Activated T-helper 1 cell treated with anti-CD3 and anti-CD28 coated beads, Interleukin-12 subunit alpha, Interleukin-12 subunit beta, Interleukin-2, Interleukin-4 antibody, amounts not matched to agents 30 ng/mL and 10 ng/mL and 1 ng/mL, durations not matched to agents 14 hours and 24 hours and 36 hours (primary cell): ENCODE measurements at regions of chr17 and their contacts with region 1.

Region 1: GRCh38 chr17:82037113-82037888 is at the start of gene DCXR:
- DNase-seq: peak; percentile 98
- H3K4me3 Mint-ChIP-seq: peak within 1 kb of the TSS; percentile 85
- H3K27ac Mint-ChIP-seq: peak within 1 kb of the TSS; percentile 93
- H3K4me1 Mint-ChIP-seq: peaks cover 24% of the 10 kb centered on the region
- H3K27me3 Mint-ChIP-seq: peaks cover 2% of the 10 kb centered on the region
- total RNA-seq, gene DCXR: 123 and 125 TPM in 2 replicates

Region 2: DNA sequence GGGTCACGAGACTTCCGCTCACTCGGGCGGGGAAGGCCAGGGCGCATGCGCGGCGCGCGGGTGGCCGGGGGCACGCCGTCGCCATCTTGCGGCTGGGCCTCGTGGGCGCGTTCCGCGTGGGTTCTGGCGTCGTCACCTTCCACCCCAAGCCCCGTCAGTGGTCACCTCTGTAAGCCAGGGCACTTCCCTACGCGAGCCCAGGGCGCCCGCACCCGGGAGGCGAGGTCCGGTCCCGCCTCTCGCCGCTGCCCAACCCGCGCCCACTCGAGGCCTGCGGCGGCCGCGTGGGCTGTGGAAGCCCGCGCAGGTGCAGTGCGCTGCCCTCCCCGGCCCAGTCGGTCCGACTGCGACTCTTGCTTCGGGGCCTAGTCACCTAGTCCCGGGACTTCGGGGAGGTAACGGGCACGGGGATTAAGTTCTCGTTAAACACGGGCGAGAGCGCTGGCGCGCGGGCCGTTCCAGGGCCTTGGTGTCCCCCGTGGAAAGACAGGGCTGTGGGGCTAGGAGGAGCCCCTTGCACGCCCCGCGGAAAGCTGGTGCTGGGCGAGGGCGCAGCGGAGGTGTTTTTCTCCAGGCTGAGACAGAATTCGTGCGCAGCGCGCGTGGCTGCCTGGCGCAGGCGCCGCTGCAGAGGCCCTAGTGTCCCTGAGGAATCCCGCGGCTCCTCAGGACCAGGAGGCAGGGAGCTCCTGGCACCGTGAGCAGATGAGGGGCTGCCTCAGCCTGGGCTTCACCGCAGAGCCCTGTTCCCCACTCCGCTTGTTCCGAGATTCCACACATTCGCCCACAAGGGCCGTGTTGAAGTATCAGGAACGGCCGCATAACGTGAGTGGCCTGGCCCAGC is 165.7 kb before region 1 on chr17:
- intact Hi-C with region 1: loop called (anchors 5 kb)
- DNase-seq: peak; percentile 96
- H3K4me3 Mint-ChIP-seq: peak overlapping the region; percentile 84
- H3K27ac Mint-ChIP-seq: peak overlapping the region; percentile 90
- H3K4me1 Mint-ChIP-seq: peaks cover 7% of the 10 kb centered on the region
- H3K27me3 Mint-ChIP-seq: no peaks in the 10 kb centered on the region

Region 3: DNA sequence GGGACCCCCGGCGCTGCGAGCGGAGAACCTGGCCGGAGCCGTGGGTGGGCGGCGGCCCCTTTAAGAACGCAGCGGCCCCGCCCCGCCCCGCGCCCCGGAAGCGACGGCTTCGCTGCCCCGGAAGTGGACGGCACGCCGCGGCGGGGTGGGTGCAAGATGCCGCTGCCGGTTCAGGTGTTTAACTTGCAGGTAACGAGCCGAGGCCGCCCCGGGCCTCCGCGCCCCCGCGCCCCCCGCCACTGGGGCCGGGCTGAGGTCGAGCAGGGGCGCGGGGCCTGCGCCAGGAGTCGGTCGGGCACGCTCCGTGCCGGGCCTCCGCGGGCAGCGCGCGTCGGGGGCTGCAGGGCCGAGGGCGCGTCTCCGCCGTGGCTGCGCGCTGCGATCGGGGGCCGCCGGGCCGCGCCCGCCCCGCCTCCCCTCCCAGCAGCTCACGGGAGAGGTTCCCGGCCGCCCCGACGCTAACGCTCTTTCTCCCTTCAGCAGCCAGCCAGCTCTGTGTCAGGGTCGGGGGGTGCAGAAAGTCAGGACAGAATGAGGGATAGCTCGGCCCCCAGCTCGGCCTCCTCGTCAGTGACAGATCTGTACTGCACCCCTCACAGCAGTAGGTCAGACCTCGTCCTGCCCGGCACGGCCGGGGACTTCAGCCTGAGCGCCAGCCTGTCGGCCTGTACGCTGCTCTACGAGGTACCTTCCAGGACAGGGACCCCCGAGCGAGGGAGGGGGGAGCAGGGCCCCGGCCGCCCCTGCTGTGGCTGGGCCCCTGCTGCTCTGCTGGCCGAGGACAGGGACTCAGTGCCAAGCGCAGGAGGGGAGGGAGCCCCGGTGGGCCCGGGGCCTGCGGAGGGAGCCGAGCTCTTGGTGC is 14.7 kb after region 1 on chr17 and contains the starts of genes GPS1 and RFNG:
- intact Hi-C with region 1: loop called (anchors 1 kb)
- DNase-seq: peak; percentile 74
- H3K4me3 Mint-ChIP-seq: peak within 1 kb of the TSS; percentile 91
- H3K27ac Mint-ChIP-seq: peak within 1 kb of the TSS; percentile 89
- H3K4me1 Mint-ChIP-seq: peaks cover 14% of the 10 kb centered on the region
- H3K27me3 Mint-ChIP-seq: no peaks in the 10 kb centered on the region
- total RNA-seq, gene GPS1: 112 and 124 TPM in 2 replicates
- total RNA-seq, gene RFNG: 24.1 and 26.8 TPM in 2 replicates

Region 4: DNA sequence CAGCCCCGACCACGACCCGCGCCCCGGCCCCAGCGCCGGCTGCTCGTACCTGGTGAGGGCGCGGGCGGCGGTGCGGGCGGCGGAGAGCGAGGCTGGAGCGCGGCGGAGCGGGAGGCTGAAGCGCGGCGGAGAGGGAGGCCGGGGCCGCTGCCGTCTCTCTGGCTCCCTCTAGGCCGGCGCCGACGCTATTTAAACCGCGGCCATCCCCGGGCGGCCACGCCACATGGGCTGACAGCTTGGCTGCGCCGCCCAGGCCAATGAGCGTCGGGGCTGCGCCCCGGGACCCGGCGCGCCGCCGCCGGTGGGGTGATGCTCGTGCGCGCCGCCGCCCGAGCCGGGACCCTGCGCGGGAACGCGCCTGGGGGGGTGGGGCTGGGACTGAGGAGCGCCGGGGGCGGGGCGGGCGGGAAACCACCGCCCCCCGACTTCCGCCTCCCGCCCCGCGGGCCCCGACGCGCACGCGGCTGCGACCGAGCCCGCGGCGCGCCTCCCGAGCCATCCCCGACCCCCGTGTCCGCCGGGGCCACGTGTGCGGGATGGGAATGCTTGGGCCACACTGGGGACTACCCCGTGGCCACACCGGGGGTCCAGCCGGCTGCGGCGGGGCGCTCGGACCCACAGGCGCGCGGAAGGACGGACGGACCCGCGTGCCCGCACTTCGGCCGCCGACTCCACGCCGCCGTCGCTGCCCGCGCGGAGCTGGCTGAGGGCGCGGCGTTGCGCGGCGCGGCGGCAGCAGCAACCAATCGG is 60.9 kb after region 1 on chr17 and contains the start of gene FASN:
- intact Hi-C with region 1: loop called (anchors 1 kb)
- DNase-seq: peak; percentile 90
- H3K4me3 Mint-ChIP-seq: peak within 1 kb of the TSS; percentile 82
- H3K27ac Mint-ChIP-seq: peak within 1 kb of the TSS; percentile 72
- H3K4me1 Mint-ChIP-seq: no peaks in the 10 kb centered on the region
- H3K27me3 Mint-ChIP-seq: no peaks in the 10 kb centered on the region
- total RNA-seq, gene FASN: 415 and 421 TPM in 2 replicates